Activated T-helper 1 cell treated with anti-CD3 and anti-CD28 coated beads, Interleukin-12 subunit alpha, Interleukin-12 subunit beta, Interleukin-2, Interleukin-4 antibody, amounts not matched to agents 30 ng/mL and 10 ng/mL and 1 ng/mL, durations not matched to agents 14 hours and 24 hours and 36 hours (primary cell): ENCODE measurements at regions of chr7 and their contacts with region 1.

Region 1: DNA sequence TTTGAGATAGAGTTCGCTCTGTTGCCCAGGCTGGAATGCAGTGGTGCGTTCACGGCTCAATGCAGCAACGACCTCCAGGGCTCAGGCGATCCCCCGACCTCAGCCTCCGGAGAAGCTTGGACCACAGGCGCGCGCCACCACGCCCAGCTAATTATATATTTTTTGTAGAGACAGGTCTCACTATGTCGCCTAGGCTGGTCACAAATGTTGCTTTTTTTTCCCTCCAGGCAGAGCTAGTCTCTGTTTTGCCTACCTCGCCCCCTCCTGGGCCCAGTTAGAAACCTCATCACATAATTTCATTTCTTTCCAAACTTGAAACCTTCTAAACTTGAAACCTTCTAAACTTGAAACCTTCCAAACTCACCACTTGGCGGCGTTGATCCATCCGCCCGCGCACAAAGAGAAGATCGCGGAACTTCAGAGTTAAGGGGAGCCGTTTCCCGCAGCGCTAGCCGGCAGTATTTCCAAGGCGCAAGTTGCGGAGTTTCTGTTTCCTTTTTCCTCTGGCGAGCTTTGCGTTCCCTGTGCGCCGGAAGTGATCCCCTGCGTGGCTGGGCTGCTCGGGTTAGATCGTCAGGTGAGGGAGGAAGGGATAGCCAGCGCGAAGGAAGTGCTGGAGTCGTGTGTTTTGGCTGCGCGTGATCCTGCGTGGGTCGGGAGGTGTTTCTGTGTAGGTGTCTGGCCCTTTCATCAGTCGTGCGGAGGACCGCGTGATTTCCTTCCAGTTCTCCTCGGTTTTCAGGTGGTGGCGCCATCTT is at the start of gene SSBP1:
- DNase-seq: peak; percentile 91
- H3K4me3 Mint-ChIP-seq: peak within 1 kb of the TSS; percentile 94
- H3K27ac Mint-ChIP-seq: peak within 1 kb of the TSS; percentile 96
- H3K4me1 Mint-ChIP-seq: peaks cover 24% of the 10 kb centered on the region
- H3K27me3 Mint-ChIP-seq: no peaks in the 10 kb centered on the region
- total RNA-seq, gene SSBP1: 240 and 245 TPM in 2 replicates

Region 2: GRCh38 chr7:140696680-140697446 is 1041.2 kb before region 1 on chr7 and contains the start of gene NDUFB2:
- intact Hi-C with region 1: loop called (anchors 1 kb)
- DNase-seq: peak; percentile 85
- H3K4me3 Mint-ChIP-seq: peak within 1 kb of the TSS; percentile 90
- H3K27ac Mint-ChIP-seq: peak within 1 kb of the TSS; percentile 96
- H3K4me1 Mint-ChIP-seq: peaks cover 30% of the 10 kb centered on the region
- H3K27me3 Mint-ChIP-seq: no peaks in the 10 kb centered on the region
- total RNA-seq, gene NDUFB2: 178 and 194 TPM in 2 replicates

Region 3: GRCh38 chr7:141262101-141263090 is 475.6 kb before region 1 on chr7:
- intact Hi-C with region 1: loop called (anchors 5 kb)
- DNase-seq: no peak
- H3K4me3 Mint-ChIP-seq: no peak overlapping the region
- H3K27ac Mint-ChIP-seq: no peak overlapping the region
- H3K4me1 Mint-ChIP-seq: peaks cover 47% of the 10 kb centered on the region
- H3K27me3 Mint-ChIP-seq: no peaks in the 10 kb centered on the region

Region 4: GRCh38 chr7:141585592-141586510 is 152.2 kb before region 1 on chr7:
- intact Hi-C with region 1: loop called (anchors 1 kb)
- DNase-seq: no peak
- H3K4me3 Mint-ChIP-seq: peak overlapping the region; percentile 75
- H3K27ac Mint-ChIP-seq: peak overlapping the region; percentile 94
- H3K4me1 Mint-ChIP-seq: peaks cover 74% of the 10 kb centered on the region
- H3K27me3 Mint-ChIP-seq: no peaks in the 10 kb centered on the region

Region 5: GRCh38 chr7:141701489-141702046 is 36.4 kb before region 1 on chr7:
- intact Hi-C with region 1: loop called (anchors 1 kb)
- DNase-seq: peak; percentile 69
- H3K4me3 Mint-ChIP-seq: peak overlapping the region; percentile 69
- H3K27ac Mint-ChIP-seq: peak overlapping the region; percentile 58
- H3K4me1 Mint-ChIP-seq: peaks cover 49% of the 10 kb centered on the region
- H3K27me3 Mint-ChIP-seq: peaks cover 5% of the 10 kb centered on the region

Region 6: DNA sequence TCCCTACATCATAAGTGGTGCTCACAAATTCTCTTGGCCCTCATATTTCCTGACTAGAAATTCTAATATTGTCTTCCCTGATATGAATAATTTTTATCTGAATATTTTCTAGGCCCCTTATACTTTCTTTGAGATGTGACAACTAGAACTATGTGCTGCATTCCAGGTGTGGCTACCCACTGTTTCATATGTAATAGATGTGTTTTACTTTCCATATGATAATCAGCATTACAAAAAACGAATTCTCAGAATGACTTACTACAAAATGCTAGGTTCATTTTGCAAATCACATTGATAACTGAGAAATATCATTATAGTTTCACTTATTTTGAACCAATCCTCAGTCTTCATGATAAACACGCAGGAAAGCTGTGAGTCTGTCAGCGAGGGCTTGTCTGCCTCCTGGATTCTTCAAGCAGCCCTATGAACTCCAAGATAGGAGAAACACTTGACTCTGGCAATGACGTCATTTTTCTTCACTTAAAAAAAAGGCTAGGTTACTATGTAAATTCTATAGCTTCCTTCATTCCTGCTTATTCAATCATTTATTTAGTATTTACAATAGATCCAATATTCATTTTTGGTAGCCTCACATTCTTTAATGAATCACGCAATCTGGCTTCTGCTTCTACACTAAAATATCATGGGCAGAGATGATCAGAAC is 25.3 kb before region 1 on chr7:
- intact Hi-C with region 1: no loop called
- DNase-seq: no peak
- H3K4me3 Mint-ChIP-seq: no peak overlapping the region
- H3K27ac Mint-ChIP-seq: no peak overlapping the region
- H3K4me1 Mint-ChIP-seq: peaks cover 12% of the 10 kb centered on the region
- H3K27me3 Mint-ChIP-seq: peaks cover 7% of the 10 kb centered on the region

Region 7: DNA sequence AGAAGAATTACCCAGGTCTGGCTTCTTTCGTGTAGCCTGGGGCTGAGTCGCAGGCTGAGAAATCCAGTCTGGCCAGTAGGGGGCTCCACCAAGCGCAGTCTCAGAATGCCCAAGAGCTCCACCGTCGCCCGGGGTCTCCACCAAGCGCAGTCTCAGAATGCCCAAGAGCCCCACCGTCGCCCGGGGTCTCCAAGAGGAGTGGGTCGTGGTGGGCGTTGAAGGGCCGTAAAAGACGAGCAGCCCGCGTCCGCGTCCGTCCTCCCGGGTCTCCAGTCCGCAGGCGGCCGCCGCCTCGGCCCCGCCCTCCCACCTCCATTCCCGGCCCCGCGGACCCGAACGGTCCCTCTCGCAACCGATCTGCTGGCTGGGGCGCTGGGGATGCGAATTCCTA is 1642.2 kb after region 1 on chr7:
- intact Hi-C with region 1: loop called (anchors 1 kb)
- DNase-seq: peak; percentile 76
- H3K4me3 Mint-ChIP-seq: peak overlapping the region; percentile 85
- H3K27ac Mint-ChIP-seq: peak overlapping the region; percentile 70
- H3K4me1 Mint-ChIP-seq: peaks cover 46% of the 10 kb centered on the region
- H3K27me3 Mint-ChIP-seq: no peaks in the 10 kb centered on the region